ENCODE measurements at regions of chr1 and their contacts with region 1.

Region 1: GRCh38 chr1:8987881-8988617 is 38.2 kb downstream of the SLC2A7 start:
- DNase-seq: peak; percentile 75
- H3K4me3 ChIP-seq: no peak overlapping the region
- H3K27ac ChIP-seq: peak overlapping the region; percentile 81
- H3K4me1 ChIP-seq: peaks cover 29% of the 10 kb centered on the region
- CTCF ChIP-seq: peak; percentile 100

Region 2: GRCh38 chr1:8913111-8913856 is 74.8 kb before region 1 on chr1:
- CTCF ChIA-PET with region 1: no interaction called
- POLR2A ChIA-PET with region 1: interaction called, 4 read pairs
- intact Hi-C with region 1: loop called (anchors 1 kb)
- DNase-seq: no peak
- H3K4me3 ChIP-seq: no peak overlapping the region
- H3K27ac ChIP-seq: no peak overlapping the region
- H3K4me1 ChIP-seq: peaks cover 2% of the 10 kb centered on the region
- CTCF ChIP-seq: no peak

Region 3: DNA sequence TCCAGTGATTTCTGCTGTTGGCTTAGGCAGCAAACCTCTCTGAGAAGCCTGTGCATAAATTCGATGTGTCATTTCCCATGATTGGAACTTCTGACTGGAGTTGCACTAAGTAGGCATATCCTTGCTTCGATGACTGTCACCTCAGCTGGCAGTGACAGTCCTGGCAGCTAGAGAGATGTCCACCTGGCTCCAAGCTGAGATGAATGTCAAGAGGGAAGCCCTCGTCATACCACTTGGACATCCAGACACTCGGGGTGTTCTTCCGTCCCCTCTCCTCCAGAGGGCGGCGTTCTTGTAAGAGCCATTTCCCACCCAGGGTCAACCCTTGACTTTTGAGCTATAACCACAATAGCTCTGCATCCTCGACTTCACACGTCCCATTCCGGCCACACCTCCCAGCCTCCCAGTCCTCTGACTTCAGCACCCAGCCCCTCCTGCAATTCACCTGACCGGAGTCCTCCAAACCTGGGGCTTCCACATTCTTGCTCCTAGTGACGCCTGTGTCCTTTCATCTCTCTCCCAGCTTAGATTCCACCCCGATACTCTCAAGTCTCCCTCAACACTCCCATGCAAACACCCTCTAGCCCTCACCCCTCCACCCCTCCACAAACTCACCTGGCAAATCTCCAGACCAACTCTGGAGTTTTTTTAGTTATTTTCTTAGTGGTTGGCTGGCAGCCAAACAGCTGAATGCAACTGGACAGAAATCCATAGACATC is 25.1 kb before region 1 on chr1:
- CTCF ChIA-PET with region 1: interaction called, 8 read pairs
- POLR2A ChIA-PET with region 1: no interaction called
- intact Hi-C with region 1: loop called (anchors 1 kb)
- DNase-seq: peak; percentile 85
- H3K4me3 ChIP-seq: no peak overlapping the region
- H3K27ac ChIP-seq: no peak overlapping the region
- H3K4me1 ChIP-seq: peaks cover 12% of the 10 kb centered on the region
- CTCF ChIP-seq: peak; percentile 85

Region 4: GRCh38 chr1:9028921-9029705 is 41.1 kb after region 1 on chr1:
- CTCF ChIA-PET with region 1: interaction called, 11 read pairs
- POLR2A ChIA-PET with region 1: no interaction called
- intact Hi-C with region 1: no loop called
- DNase-seq: no peak
- H3K4me3 ChIP-seq: no peak overlapping the region
- H3K27ac ChIP-seq: no peak overlapping the region
- H3K4me1 ChIP-seq: peaks cover 20% of the 10 kb centered on the region
- CTCF ChIP-seq: no peak